ENCODE measurements at regions of chr1 and their contacts with region 1.

Region 1: DNA sequence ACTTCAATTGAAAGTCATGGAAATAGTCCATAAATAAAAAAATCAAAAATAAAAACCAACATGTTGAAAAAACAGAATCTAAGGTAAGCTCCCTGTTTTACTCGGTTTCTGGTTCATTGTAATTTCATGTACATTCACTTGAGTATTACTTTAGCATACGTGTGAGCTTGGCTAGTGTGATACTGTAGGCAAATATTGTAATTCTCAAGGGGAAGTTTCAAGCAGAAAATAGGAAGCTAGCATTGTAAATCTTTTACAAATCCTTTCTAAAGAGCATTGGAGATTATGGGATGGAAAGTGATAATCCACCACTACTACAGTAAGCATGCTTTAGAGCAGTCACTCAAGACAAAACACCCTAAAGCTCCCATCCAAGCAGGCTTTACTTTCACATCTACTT is 3.3 kb upstream of the LPAR3 start:
- DNase-seq: no peak
- H3K4me3 Mint-ChIP-seq: no peak overlapping the region
- H3K27ac Mint-ChIP-seq: no peak overlapping the region
- H3K4me1 Mint-ChIP-seq: no peaks in the 10 kb centered on the region
- H3K27me3 Mint-ChIP-seq: no peaks in the 10 kb centered on the region
- CTCF ChIP-seq: no peak

Region 2: DNA sequence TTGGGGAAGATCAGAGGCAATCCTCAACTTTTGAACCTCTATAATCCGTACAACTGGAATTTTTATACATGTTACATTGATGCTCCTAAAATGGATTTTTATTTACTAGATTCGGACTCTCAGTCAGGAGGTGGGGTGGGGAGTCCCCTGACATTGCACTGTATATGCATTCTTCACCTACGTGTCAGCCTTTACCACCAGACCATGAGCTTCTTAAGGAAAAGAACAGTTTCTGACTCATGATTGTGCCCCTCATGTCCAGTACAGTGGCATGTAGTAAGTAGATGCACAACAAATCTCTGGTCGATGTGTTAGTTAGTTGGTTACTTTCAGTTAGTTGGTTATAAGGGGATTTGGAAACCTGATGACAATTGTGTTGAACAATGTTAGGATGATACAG is 18.7 kb before region 1 on chr1:
- CTCF ChIA-PET with region 1: no interaction called
- POLR2A ChIA-PET with region 1: no interaction called
- intact Hi-C with region 1: no loop called
- DNase-seq: no peak
- H3K4me3 Mint-ChIP-seq: no peak overlapping the region
- H3K27ac Mint-ChIP-seq: no peak overlapping the region
- H3K4me1 Mint-ChIP-seq: peaks cover 10% of the 10 kb centered on the region
- H3K27me3 Mint-ChIP-seq: no peaks in the 10 kb centered on the region
- CTCF ChIP-seq: no peak

Region 3: GRCh38 chr1:84907095-84907827 is 11.0 kb after region 1 on chr1:
- CTCF ChIA-PET with region 1: interaction called, 13 read pairs
- POLR2A ChIA-PET with region 1: no interaction called
- intact Hi-C with region 1: no loop called
- DNase-seq: no peak
- H3K4me3 Mint-ChIP-seq: no peak overlapping the region
- H3K27ac Mint-ChIP-seq: no peak overlapping the region
- H3K4me1 Mint-ChIP-seq: peaks cover 6% of the 10 kb centered on the region
- H3K27me3 Mint-ChIP-seq: no peaks in the 10 kb centered on the region
- CTCF ChIP-seq: no peak

Measured in MCF 10A (cell line).